ENCODE measurements at regions of chr2 and their contacts with region 1.

Region 1: DNA sequence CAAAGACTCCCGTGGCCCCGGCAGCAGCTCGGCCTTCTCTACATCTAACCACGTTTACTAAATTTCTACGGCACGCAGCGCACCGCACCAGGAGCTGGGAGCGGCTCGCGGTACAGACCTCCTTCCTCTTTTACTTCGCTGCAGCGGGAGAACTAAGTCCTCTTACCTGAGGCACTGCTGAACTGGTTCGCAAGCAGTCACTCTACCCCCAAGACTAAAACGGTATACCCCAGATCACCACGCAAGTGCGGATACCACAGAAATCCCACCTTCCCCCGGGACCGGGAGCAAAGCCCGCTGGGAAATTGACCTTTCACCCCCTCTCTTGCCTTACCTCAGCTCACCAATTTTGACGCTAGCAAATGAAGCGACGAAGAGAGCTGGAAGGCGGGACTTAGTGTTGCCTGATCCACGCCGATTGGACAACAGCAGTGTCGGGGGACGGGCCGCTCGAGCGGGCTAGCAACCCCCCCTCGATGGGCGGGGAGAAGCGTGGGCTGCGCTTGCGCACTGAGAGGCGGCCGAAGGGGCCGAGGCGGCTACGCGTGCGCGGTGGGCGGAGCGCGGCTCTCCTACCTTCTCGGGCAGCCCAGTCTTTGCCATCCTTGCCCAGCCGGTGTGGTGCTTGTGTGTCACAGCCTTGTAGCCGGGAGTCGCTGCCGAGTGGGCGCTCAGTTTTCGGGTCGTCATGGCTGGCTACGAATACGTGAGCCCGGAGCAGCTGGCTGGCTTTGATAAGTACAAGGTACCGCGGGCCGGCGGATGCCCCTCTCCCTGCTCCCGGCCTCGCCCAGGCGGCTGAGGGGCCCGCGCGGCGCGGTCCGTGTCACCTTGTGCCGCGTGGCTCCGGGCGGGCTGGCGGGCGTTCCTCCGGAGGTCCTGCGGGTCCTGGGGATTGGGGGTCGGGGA is at the start of gene SELENOI:
- DNase-seq: peak; percentile 99
- ATAC-seq: peak; percentile 99
- H3K4me3 ChIP-seq: peak within 1 kb of the TSS; percentile 87 to 95 (median 92)
- H3K27ac ChIP-seq: peak within 1 kb of the TSS; percentile 91 to 98 (median 95)
- H3K4me1 ChIP-seq: peaks cover 26 to 27% of the 10 kb centered on the region in 2 donors
- H3K27me3 ChIP-seq: no peaks in the 10 kb centered on the region
- CTCF ChIP-seq: no peak
- POLR2A ChIP-seq: peak; percentile 91 to 93
- total RNA-seq, gene SELENOI: 8.5 to 30.6 (median 17.0) TPM

Region 2: DNA sequence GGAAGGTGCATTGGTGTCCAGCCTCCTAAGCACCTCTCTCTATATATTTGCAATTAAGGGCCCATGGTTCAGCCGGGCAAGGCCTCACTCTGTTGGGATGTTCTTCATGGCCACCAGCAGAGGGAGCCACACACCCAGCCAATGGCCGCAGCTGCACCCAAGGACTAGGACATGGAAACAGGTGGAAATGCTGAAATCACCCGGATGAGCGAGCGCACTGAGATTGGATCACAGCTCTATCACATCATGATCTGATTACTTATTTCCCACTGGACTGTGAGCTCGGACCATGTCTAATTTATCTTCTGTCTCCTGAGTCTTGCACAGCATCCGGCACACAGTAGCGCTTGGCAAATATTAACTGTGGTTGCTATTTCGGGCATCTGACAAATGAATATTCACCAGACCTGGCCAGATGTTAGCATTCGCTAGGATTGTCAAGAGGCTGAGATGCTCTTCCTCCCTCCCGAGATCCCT is 394.7 kb before region 1 on chr2:
- in situ Hi-C with region 1: loop called in 3 of 4 experiments (anchors 25 kb)
- intact Hi-C with region 1: no loop called
- DNase-seq: peak; percentile 59 to 71
- ATAC-seq: peak; percentile 91 to 97
- H3K4me3 ChIP-seq: no peak overlapping the region
- H3K27ac ChIP-seq: peak overlapping the region in 2 of 4 donors; percentile 29 to 48
- H3K4me1 ChIP-seq: no peaks in the 10 kb centered on the region
- H3K27me3 ChIP-seq: no peaks in the 10 kb centered on the region
- CTCF ChIP-seq: peak; percentile 90 to 95 (median 92)
- POLR2A ChIP-seq: no peak

Region 3: DNA sequence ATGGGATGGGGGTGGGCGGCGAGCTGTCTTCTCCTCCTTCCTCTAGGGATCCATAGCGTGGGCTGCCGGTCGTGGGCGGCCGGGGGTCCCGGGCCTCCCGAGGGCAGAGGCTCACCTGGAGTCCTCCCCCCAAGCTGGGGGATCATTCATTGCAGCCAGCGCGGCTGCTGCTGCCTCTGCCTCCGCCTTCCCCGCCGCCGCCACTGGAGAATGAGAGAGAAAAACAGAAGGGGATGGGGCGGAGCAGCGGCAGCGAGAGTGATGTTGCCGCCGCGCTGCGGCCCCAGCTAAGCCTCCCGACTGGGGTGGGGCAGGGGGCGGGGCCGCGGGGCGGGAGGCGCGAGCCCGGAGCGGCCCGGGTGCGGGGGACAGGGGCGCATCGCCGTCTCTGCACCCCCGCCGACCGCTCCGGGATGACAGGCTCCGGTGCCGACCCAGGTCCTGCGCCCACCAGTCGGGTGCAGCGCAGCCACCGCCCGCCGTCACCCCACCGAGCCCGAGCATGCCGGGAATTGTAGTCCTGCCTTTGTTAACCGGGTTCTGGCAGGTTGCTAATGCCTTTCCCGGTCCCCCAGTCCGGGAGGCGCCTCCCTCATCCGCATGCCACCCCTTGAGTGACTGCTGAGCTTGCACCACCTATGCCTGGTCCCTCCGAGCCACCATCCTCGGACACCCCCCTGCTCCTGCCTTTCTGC is 363.4 kb before region 1 on chr2 and contains the start of gene KIF3C:
- in situ Hi-C with region 1: loop called in 1 of 4 experiments (anchors 25 kb)
- intact Hi-C with region 1: no loop called
- DNase-seq: peak; percentile 17 to 27
- ATAC-seq: peak; percentile 57 to 60
- H3K4me3 ChIP-seq: peak within 1 kb of the TSS; percentile 71 to 88 (median 76)
- H3K27ac ChIP-seq: peak within 1 kb of the TSS; percentile 29 to 67 (median 56)
- H3K4me1 ChIP-seq: peaks cover 6 to 10% of the 10 kb centered on the region in 2 donors
- H3K27me3 ChIP-seq: no peaks in the 10 kb centered on the region
- CTCF ChIP-seq: no peak
- POLR2A ChIP-seq: no peak
- total RNA-seq, gene KIF3C: 1.1 to 4.4 (median 2.1) TPM

Region 4: DNA sequence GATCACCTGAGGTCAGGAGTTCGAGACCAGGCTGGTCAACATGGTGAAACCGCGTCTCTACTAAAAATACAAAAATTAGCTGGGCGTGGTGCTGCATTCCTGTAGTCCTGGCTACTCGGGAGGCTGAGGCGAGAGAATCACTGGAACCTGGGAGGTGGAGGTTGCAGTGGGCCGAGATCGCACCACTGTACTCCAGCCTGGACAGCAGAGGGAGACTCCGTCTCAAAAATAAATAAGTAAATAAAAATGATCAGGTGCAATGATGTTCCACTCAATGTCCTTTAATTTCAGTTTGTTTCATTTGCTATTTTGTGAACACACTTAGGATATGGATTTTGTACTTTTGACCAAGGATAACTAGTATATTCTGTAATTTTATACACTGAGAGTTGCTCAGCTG is 110.7 kb before region 1 on chr2:
- in situ Hi-C with region 1: no loop called
- intact Hi-C with region 1: loop called (anchors 5 kb)
- DNase-seq: no peak
- ATAC-seq: no peak
- H3K4me3 ChIP-seq: no peak overlapping the region
- H3K27ac ChIP-seq: no peak overlapping the region
- H3K4me1 ChIP-seq: peaks cover 27 to 36% of the 10 kb centered on the region in 2 donors
- H3K27me3 ChIP-seq: no peaks in the 10 kb centered on the region
- CTCF ChIP-seq: peak; percentile 15 to 44 (median 26)
- POLR2A ChIP-seq: no peak

Region 5: GRCh38 chr2:26764078-26764887 is 418.5 kb after region 1 on chr2 and contains the start of gene SLC35F6:
- in situ Hi-C with region 1: no loop called
- intact Hi-C with region 1: loop called (anchors 10 kb)
- DNase-seq: peak; percentile 71 to 77
- ATAC-seq: peak; percentile 83 to 93
- H3K4me3 ChIP-seq: peak within 1 kb of the TSS; percentile 56 to 100 (median 90)
- H3K27ac ChIP-seq: peak within 1 kb of the TSS; percentile 93 to 99 (median 98)
- H3K4me1 ChIP-seq: peaks cover 16 to 38% of the 10 kb centered on the region in 2 donors
- H3K27me3 ChIP-seq: no peaks in the 10 kb centered on the region
- CTCF ChIP-seq: peak in 1 of 5 experiments; percentile 39
- POLR2A ChIP-seq: peak; percentile 96 to 98
- total RNA-seq, gene SLC35F6: 37.8 to 54.5 (median 45.9) TPM

Region 6: GRCh38 chr2:26970244-26970920 is 624.6 kb after region 1 on chr2 and contains the start of gene MAPRE3:
- in situ Hi-C with region 1: no loop called
- intact Hi-C with region 1: loop called (anchors 10 kb)
- DNase-seq: peak; percentile 60 to 78
- ATAC-seq: peak; percentile 73 to 75
- H3K4me3 ChIP-seq: peak within 1 kb of the TSS; percentile 67 to 87 (median 79)
- H3K27ac ChIP-seq: peak within 1 kb of the TSS; percentile 94 to 97 (median 96)
- H3K4me1 ChIP-seq: peaks cover 37 to 41% of the 10 kb centered on the region in 2 donors
- H3K27me3 ChIP-seq: no peaks in the 10 kb centered on the region
- CTCF ChIP-seq: no peak
- POLR2A ChIP-seq: peak; percentile 92
- total RNA-seq, gene MAPRE3: 41.9 to 66.5 (median 53.9) TPM